Psoas muscle (tissue), 8 donors: ENCODE measurements at regions of chr18 and their contacts with region 1.

Region 1: DNA sequence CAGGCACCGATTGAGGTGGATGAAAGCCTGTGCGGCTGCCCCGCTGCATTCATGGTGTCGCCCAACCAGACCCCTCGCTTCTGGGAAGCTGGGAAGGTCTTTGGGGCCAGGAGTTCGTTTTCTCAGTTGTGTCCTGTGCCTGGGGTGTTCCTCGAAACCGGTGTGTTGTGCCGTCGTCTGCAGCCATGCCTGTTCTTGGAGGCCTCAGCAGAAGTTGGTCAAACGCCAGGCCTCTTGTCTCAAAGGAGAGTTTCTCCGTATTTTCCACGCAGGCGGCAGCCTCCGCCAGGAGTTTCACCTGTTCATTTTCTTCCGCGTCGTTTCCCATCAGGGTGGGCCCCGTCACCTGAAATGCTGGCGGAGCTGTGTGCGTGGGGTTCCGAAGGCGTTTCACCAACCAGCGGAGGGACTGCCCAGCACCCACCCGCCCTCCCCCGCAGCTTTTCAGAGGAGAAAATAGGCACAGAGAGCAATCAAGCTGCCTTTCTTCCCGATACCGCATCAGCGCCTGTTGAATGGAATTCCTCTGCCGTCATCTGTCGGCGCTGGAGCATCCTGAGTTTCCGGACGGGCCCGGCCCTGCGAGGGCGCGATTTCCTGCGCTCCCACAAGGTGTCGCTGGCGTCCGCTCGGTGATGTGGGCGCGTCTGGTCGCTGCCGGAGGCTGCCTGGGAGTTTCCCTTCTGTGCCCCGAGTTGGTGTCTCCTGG is 17.0 kb upstream of the NFATC1 start:
- DNase-seq: peak; percentile 77 to 89
- ATAC-seq: peak; percentile 85 to 88 (median 86)
- H3K4me3 ChIP-seq: no peak overlapping the region
- H3K27ac ChIP-seq: no peak overlapping the region
- H3K4me1 ChIP-seq: peaks cover 3% of the 10 kb centered on the region
- H3K27me3 ChIP-seq: no peaks in the 10 kb centered on the region
- CTCF ChIP-seq: peak; percentile 97

Region 2: GRCh38 chr18:79453816-79454735 is 75.4 kb after region 1 on chr18:
- intact Hi-C with region 1: no loop called
- DNase-seq: no peak
- ATAC-seq: peak in 3 of 4 donors; percentile 43 to 59 (median 50)
- H3K4me3 ChIP-seq: no peak overlapping the region
- H3K27ac ChIP-seq: no peak overlapping the region
- H3K4me1 ChIP-seq: no peaks in the 10 kb centered on the region
- H3K27me3 ChIP-seq: no peaks in the 10 kb centered on the region
- CTCF ChIP-seq: no peak

Region 3: GRCh38 chr18:79528846-79529245 is 150.2 kb after region 1 on chr18:
- intact Hi-C with region 1: loop called (anchors 1 to 2 kb)
- DNase-seq: peak in 1 of 2 donors; percentile 49
- ATAC-seq: peak; percentile 59 to 77 (median 68)
- H3K4me3 ChIP-seq: no peak overlapping the region
- H3K27ac ChIP-seq: no peak overlapping the region
- H3K4me1 ChIP-seq: no peaks in the 10 kb centered on the region
- H3K27me3 ChIP-seq: no peaks in the 10 kb centered on the region
- CTCF ChIP-seq: peak; percentile 89

Region 4: GRCh38 chr18:79644006-79644665 is 265.4 kb after region 1 on chr18:
- intact Hi-C with region 1: loop called (anchors 1 kb)
- DNase-seq: peak; percentile 53 to 72
- ATAC-seq: peak; percentile 73 to 85 (median 82)
- H3K4me3 ChIP-seq: no peak overlapping the region
- H3K27ac ChIP-seq: no peak overlapping the region
- H3K4me1 ChIP-seq: peaks cover 3% of the 10 kb centered on the region
- H3K27me3 ChIP-seq: peaks cover 0 to 18% (median 2%) of the 10 kb centered on the region in 3 donors
- CTCF ChIP-seq: peak; percentile 98

Region 5: GRCh38 chr18:79944126-79944741 is 565.5 kb after region 1 on chr18:
- intact Hi-C with region 1: loop called in 1 of 2 experiments (anchors 10 kb)
- DNase-seq: peak in 1 of 2 donors; percentile 45
- ATAC-seq: peak in 1 of 4 donors; percentile 26
- H3K4me3 ChIP-seq: no peak overlapping the region
- H3K27ac ChIP-seq: no peak overlapping the region
- H3K4me1 ChIP-seq: peaks cover 45% of the 10 kb centered on the region
- H3K27me3 ChIP-seq: no peaks in the 10 kb centered on the region
- CTCF ChIP-seq: no peak